Activated CD8-positive, alpha-beta T cell treated with anti-CD3 and anti-CD28 coated beads, Interleukin-2, amount 10 ng/mL, durations not matched to agents 7 days and 5 days (primary cell): ENCODE measurements at regions of chr3 and their contacts with region 1.

Region 1: GRCh38 chr3:150787741-150788370 is 24.9 kb upstream of the SIAH2 start:
- DNase-seq: peak; percentile 86
- ATAC-seq: peak; percentile 93
- H3K4me3 Mint-ChIP-seq: no peak overlapping the region
- H3K27ac Mint-ChIP-seq: no peak overlapping the region
- H3K4me1 Mint-ChIP-seq: peaks cover 9% of the 10 kb centered on the region
- H3K27me3 Mint-ChIP-seq: peaks cover 13% of the 10 kb centered on the region

Region 2: DNA sequence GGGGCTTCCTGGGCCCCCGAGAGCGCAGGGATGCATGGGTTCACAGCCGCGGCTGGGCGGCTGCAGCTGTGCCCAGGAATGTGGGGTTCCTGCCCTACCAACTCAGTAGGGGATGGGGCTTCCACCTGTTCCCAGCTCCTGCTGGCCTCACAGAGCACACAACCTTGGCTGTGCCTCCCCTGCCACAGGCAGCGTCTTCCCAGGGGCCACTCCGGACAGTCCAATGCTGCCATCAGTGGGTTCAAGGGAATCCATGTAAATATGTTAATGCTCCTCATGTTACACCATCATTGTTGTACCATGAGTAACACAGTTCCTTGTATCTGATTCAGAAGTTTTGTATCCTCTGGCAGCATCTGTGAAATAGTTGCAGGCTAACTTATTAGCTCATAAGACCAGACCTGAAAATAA is 12.8 kb before region 1 on chr3:
- CTCF ChIA-PET with region 1: interaction called, 16 read pairs
- POLR2A ChIA-PET with region 1: no interaction called
- DNase-seq: no peak
- ATAC-seq: no peak
- H3K4me3 Mint-ChIP-seq: no peak overlapping the region
- H3K27ac Mint-ChIP-seq: no peak overlapping the region
- H3K4me1 Mint-ChIP-seq: no peaks in the 10 kb centered on the region
- H3K27me3 Mint-ChIP-seq: no peaks in the 10 kb centered on the region

Region 3: GRCh38 chr3:150830094-150830681 is 42.3 kb after region 1 on chr3:
- CTCF ChIA-PET with region 1: interaction called, 12 read pairs
- POLR2A ChIA-PET with region 1: no interaction called
- DNase-seq: peak; percentile 26
- ATAC-seq: no peak
- H3K4me3 Mint-ChIP-seq: no peak overlapping the region
- H3K27ac Mint-ChIP-seq: no peak overlapping the region
- H3K4me1 Mint-ChIP-seq: no peaks in the 10 kb centered on the region
- H3K27me3 Mint-ChIP-seq: peaks cover 11% of the 10 kb centered on the region

Region 4: DNA sequence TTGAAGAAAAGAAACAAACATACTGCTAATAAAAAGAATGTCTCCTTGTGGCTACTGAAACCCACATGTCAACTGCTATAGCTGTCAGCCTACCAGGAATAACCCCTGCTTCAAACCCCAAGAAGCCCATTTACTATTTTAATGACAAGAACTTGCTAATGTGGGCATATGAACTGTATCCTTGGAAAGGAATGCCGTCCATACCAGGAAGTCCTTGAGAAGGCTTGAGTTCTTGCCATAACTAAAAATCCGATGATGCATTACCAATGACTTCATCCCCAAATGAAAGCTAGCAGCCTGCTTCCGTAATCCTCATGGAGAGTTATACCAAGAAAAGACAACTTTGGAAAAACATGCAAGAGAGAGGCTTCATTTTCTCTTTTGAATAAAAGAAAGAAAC is 82.5 kb after region 1 on chr3:
- CTCF ChIA-PET with region 1: interaction called, 17 read pairs
- POLR2A ChIA-PET with region 1: no interaction called
- DNase-seq: no peak
- ATAC-seq: no peak
- H3K4me3 Mint-ChIP-seq: no peak overlapping the region
- H3K27ac Mint-ChIP-seq: no peak overlapping the region
- H3K4me1 Mint-ChIP-seq: peaks cover under 1% of the 10 kb centered on the region
- H3K27me3 Mint-ChIP-seq: peaks cover 14% of the 10 kb centered on the region